ENCODE measurements at regions of chr11 and their contacts with region 1.

Region 1: GRCh38 chr11:33742249-33742851 is 6.1 kb upstream of the CD59 start:
- DNase-seq: peak in 1 of 35 experiments; percentile 49
- ATAC-seq: peak in 3 of 4 experiments; percentile 48 to 66 (median 55)
- H3K4me3 ChIP-seq: no peak overlapping the region
- H3K4me3 Mint-ChIP-seq: no peak overlapping the region
- H3K27ac ChIP-seq: no peak overlapping the region
- H3K27ac Mint-ChIP-seq: no peak overlapping the region
- H3K4me1 ChIP-seq: no peaks in the 10 kb centered on the region
- H3K4me1 Mint-ChIP-seq: peaks cover 0 to 6% (median 0%) of the 10 kb centered on the region in 3 donors
- H3K27me3 ChIP-seq: no peaks in the 10 kb centered on the region
- H3K27me3 Mint-ChIP-seq: no peaks in the 10 kb centered on the region

Region 2: GRCh38 chr11:33362051-33362910 is 380.1 kb before region 1 on chr11:
- CTCF ChIA-PET with region 1: interaction called, 5 to 31 read pairs
- POLR2A ChIA-PET with region 1: interaction called in 1 of 2 experiments, 4 read pairs
- DNase-seq: peak in 9 of 35 experiments; percentile 1 to 61 (median 11)
- ATAC-seq: peak; percentile 23 to 49 (median 42)
- H3K4me3 ChIP-seq: no peak overlapping the region
- H3K4me3 Mint-ChIP-seq: no peak overlapping the region
- H3K27ac ChIP-seq: no peak overlapping the region
- H3K27ac Mint-ChIP-seq: no peak overlapping the region
- H3K4me1 ChIP-seq: peaks cover 0 to 4% of the 10 kb centered on the region in 2 experiments
- H3K4me1 Mint-ChIP-seq: peaks cover 0 to 2% (median 2%) of the 10 kb centered on the region in 3 donors
- H3K27me3 ChIP-seq: peaks cover 0 to 5% of the 10 kb centered on the region in 2 experiments
- H3K27me3 Mint-ChIP-seq: peaks cover 5 to 11% of the 10 kb centered on the region in 2 donors

Region 3: GRCh38 chr11:33700425-33701271 is 41.7 kb before region 1 on chr11 and contains the start of gene C11orf91:
- CTCF ChIA-PET with region 1: interaction called, 8 to 22 read pairs
- POLR2A ChIA-PET with region 1: interaction called in 1 of 2 experiments, 4 read pairs
- DNase-seq: peak; percentile 80 to 97 (median 87)
- ATAC-seq: peak; percentile 90 to 96 (median 94)
- H3K4me3 ChIP-seq: peak within 1 kb of the TSS; percentile 64 to 76
- H3K4me3 Mint-ChIP-seq: peak within 1 kb of the TSS; percentile 86 to 92 (median 88)
- H3K27ac ChIP-seq: no peak within 1 kb of the TSS
- H3K27ac Mint-ChIP-seq: peak within 1 kb of the TSS; percentile 1 to 63
- H3K4me1 ChIP-seq: peaks cover 0 to 13% of the 10 kb centered on the region in 2 experiments
- H3K4me1 Mint-ChIP-seq: peaks cover 16 to 31% (median 19%) of the 10 kb centered on the region in 3 donors
- H3K27me3 ChIP-seq: peaks cover 0 to 10% of the 10 kb centered on the region in 2 experiments
- H3K27me3 Mint-ChIP-seq: peaks cover 10 to 13% of the 10 kb centered on the region in 2 donors
- total RNA-seq, gene C11orf91: 0.95 TPM in 1 of 5 donors, not detected in the others

Region 4: DNA sequence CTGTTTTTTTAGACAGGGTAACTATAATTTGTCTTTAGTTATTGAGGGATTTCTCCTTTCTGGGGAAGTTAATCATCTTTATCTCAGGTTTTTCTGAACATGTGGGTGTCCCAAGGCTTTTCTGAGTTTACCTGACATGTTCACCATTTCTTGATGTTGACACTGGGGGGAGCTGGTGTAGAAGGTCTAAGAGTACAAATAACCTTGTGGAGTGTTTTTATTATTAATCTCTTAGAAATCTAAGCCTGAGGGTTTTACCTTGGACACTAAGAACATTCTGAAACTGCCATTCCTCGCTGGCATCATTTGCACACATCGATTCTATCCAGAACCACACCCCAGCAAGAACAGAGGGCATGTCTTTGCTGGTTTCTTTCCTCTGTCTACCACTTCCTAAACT is 26.1 kb before region 1 on chr11:
- CTCF ChIA-PET with region 1: interaction called, 10 to 35 read pairs
- POLR2A ChIA-PET with region 1: interaction called, 3 read pairs
- DNase-seq: peak in 1 of 35 experiments; percentile 47
- ATAC-seq: no peak
- H3K4me3 ChIP-seq: no peak overlapping the region
- H3K4me3 Mint-ChIP-seq: no peak overlapping the region
- H3K27ac ChIP-seq: no peak overlapping the region
- H3K27ac Mint-ChIP-seq: no peak overlapping the region
- H3K4me1 ChIP-seq: no peaks in the 10 kb centered on the region
- H3K4me1 Mint-ChIP-seq: no peaks in the 10 kb centered on the region
- H3K27me3 ChIP-seq: no peaks in the 10 kb centered on the region
- H3K27me3 Mint-ChIP-seq: no peaks in the 10 kb centered on the region

Region 5: GRCh38 chr11:33874910-33875490 is 132.7 kb after region 1 on chr11:
- CTCF ChIA-PET with region 1: no interaction called
- POLR2A ChIA-PET with region 1: no interaction called
- DNase-seq: no peak
- ATAC-seq: no peak
- H3K4me3 ChIP-seq: no peak overlapping the region
- H3K4me3 Mint-ChIP-seq: no peak overlapping the region
- H3K27ac ChIP-seq: no peak overlapping the region
- H3K27ac Mint-ChIP-seq: no peak overlapping the region
- H3K4me1 ChIP-seq: peaks cover 2 to 8% of the 10 kb centered on the region in 2 experiments
- H3K4me1 Mint-ChIP-seq: peaks cover 2 to 8% (median 5%) of the 10 kb centered on the region in 3 donors
- H3K27me3 ChIP-seq: peaks cover 0 to 46% of the 10 kb centered on the region in 2 experiments
- H3K27me3 Mint-ChIP-seq: peaks cover 57 to 68% of the 10 kb centered on the region in 2 donors

Region 6: DNA sequence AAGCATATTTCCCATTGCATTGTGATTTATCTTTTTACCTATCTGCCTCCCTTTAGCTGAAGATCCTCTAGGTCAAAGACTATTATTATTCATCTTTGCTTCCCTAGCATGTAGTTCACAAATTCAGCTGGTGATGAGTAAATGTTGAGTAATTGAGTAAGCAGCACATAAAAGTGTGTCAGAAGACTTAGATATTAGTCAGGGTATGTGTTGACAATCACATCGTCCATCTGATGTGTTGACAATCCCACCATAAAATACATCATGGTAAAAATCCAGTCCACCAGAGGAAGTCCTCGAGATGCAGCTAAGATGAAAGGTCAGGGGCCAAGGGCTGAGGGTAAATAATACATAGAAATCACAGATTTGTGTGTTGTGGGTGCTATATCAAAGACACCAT is 638.3 kb after region 1 on chr11:
- CTCF ChIA-PET with region 1: no interaction called
- POLR2A ChIA-PET with region 1: no interaction called
- DNase-seq: no peak
- ATAC-seq: no peak
- H3K4me3 ChIP-seq: no peak overlapping the region
- H3K4me3 Mint-ChIP-seq: no peak overlapping the region
- H3K27ac ChIP-seq: no peak overlapping the region
- H3K27ac Mint-ChIP-seq: no peak overlapping the region
- H3K4me1 ChIP-seq: no peaks in the 10 kb centered on the region
- H3K4me1 Mint-ChIP-seq: no peaks in the 10 kb centered on the region
- H3K27me3 ChIP-seq: peaks cover 0 to 2% of the 10 kb centered on the region in 2 experiments
- H3K27me3 Mint-ChIP-seq: peaks cover 3 to 7% of the 10 kb centered on the region in 2 donors

Region 7: DNA sequence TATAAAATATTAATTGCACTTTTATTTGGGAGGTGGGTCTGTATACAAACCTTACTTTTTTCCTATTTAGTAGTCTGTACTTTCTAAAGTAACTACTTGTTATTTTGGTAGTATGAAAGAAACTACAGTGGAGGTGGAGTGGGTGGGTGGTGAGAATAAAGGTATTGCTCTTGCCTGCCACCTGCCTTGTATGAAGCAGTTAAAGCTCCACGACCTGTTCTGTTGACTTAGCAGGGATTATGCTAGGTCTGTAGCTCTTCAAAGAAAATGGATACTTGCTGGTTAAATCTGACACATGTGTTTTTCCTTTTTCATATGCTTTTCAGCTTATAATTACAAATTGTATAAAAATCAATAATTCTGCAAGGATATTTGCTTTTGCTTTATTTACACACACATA is 990.5 kb after region 1 on chr11:
- CTCF ChIA-PET with region 1: no interaction called
- POLR2A ChIA-PET with region 1: no interaction called
- DNase-seq: no peak
- ATAC-seq: no peak
- H3K4me3 ChIP-seq: no peak overlapping the region
- H3K4me3 Mint-ChIP-seq: no peak overlapping the region
- H3K27ac ChIP-seq: no peak overlapping the region
- H3K27ac Mint-ChIP-seq: no peak overlapping the region
- H3K4me1 ChIP-seq: no peaks in the 10 kb centered on the region
- H3K4me1 Mint-ChIP-seq: no peaks in the 10 kb centered on the region
- H3K27me3 ChIP-seq: peaks cover 4 to 14% of the 10 kb centered on the region in 2 experiments
- H3K27me3 Mint-ChIP-seq: peaks cover 29 to 40% of the 10 kb centered on the region in 2 donors